ENCODE measurements at regions of chr7 and their contacts with region 1.

Region 1: GRCh38 chr7:128398016-128398840 is 11.6 kb downstream of the IMPDH1 start:
- DNase-seq: peak in 7 of 10 donors; percentile 58 to 93 (median 76)

Region 2: GRCh38 chr7:128343554-128344430 is 54.4 kb before region 1 on chr7 and contains the start of gene RBM28:
- intact Hi-C with region 1: no loop called
- DNase-seq: peak; percentile 75 to 97 (median 82)

Region 3: DNA sequence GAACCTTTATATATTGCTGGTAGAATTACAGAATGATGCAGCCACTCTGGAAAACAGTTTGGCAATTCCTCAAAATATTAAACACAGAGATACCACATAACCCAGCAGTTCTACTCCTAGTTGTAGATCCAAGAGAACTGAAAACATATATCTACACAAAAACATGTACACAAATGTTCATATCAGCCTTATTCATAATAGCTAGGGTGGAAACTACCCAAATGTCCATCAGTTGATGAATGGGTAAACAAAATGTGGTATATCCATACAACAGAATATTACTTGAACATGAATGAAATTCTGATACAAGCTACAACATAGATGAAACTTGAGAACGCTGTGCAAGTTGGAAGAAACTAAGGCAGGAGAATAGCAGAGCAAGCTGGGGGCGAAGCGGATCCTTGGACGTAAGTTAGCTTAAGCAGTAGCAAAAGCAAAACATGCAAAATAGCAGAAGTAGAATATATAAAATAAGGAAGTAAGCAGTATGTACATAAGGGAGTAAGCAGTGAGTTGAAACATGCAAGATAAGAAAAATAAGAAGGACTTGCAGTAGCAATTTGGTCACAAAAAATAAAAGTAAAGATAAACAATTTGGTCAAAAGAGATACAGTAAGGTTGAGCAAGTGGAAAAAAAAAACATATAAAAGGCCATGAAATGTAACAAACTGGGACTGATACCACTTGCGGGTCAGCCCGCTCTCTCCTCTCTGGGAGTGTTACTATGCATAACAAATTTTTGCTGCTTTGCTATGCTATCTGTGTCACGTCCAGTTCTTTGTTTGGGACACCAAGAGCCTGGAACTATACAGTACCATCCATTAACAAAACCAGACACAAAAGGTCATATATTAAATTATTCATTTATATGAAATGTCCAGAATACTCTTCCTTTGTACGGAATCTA is 39.5 kb after region 1 on chr7:
- intact Hi-C with region 1: no loop called
- DNase-seq: no peak

Region 4: DNA sequence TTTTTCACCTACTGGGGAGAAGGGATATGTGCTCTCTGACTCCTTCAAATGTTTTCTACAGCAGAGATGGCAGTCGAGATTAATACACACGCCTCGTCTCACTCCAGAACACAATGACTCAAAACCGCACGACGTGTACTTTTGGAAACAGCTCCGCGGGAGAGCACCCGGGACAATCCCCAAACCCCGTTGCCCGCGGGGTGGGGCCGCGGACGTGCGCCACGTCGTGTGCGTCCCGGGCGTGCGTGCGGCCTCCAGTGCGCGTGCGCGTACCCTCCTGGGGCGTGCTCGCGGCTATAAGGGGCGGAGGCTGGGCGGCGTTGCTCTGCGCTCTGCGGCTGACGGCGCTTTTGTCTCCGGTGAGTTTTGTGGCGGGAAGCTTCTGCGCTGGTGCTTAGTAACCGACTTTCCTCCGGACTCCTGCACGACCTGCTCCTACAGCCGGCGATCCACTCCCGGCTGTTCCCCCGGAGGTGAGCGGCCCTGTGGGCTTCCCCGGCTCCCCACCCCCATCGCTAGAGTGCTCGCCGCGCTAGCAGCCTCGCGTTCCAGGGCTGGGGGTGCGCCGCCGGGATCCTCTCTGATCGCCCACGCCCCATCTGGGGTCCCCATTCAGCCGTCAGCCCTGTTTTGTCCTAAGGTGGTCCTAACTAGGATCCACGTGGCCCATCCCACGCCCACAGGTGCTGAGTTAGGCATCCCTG is 57.5 kb after region 1 on chr7 and contains the start of gene HILPDA:
- intact Hi-C with region 1: loop called (anchors 2 kb)
- DNase-seq: peak; percentile 81 to 98 (median 88)